ENCODE measurements at regions of chr3 and their contacts with region 1.

Region 1: DNA sequence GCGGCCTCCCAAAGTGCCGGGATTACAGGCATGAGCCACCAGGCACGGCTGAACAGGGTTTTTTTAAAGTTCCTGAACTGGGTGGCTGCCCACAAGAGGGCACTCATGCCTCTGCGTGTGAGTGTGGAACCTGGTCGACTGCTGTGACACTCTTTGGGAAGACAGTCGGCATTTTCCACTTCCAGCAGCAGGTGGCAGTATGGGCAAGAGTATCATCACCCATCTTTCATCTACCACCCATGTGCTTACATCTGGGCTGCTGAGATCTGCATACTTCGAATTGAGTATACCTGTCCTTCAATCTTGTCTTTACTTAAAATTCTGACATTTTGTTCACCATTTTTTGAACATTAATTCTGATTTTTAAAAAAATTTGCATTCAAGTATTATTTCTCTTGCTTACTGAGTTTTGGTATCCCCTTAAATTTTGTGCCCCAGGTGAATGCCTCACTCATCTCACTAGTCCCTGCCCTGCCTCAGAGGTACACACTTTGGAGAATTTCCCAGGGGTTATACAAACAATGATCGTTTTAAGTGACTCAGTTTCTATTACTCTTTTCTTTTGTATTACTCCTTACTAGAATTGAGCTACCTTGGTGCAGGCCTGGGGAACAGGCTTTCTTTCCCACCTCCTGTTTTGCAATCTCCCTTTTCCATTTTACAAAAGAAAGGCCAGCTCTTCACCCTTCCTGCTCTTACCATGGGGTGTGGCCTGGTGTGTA is 11.8 kb downstream of the CLEC3B start:
- DNase-seq: peak; percentile 87 to 95 (median 90)
- ATAC-seq: peak; percentile 88 to 92 (median 90)
- H3K4me3 ChIP-seq: no peak overlapping the region
- H3K27ac ChIP-seq: no peak overlapping the region
- H3K4me1 ChIP-seq: peaks cover 0 to 10% (median 0%) of the 10 kb centered on the region in 3 donors
- H3K27me3 ChIP-seq: no peaks in the 10 kb centered on the region
- CTCF ChIP-seq: peak; percentile 83 to 90 (median 86)

Region 2: DNA sequence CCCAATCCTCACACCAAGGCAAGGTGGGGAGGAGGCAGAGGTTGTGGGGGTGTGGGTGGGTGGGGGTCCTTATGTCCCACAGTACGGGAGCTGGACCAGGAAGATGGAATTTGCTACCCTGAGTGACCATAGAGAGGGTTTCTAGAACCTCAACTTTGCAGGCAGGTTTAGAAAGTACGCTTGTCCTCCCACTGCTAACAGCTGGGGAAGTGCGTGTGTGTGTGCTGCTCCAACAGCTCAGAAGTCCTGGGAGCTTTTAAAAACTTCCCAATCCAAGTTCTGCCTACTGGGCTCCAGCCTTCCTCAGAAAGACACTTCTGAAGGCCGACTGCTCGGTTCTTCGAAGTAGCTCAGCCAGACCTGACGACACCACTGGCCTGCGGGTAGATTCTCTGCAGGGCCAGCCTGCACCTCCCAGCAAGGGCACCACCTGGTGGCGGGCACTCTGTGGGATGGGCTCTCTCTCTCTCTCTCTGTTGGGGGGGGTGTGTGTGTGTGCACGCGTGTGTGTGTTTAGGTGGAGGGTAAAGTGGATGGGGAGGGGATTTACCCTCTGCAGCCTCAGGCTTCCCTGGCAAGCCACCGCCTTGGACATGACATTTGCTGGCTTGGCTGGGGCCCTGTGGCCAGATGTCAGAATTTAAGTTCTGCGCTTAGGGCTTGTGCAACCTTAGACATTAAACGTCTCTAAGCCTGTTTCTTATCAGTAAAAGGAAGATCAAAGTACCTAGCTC is 172.6 kb after region 1 on chr3:
- intact Hi-C with region 1: loop called (anchors 5 to 10 kb)
- DNase-seq: peak; percentile 80 to 94 (median 88)
- ATAC-seq: peak; percentile 99 to 100 (median 100)
- H3K4me3 ChIP-seq: no peak overlapping the region
- H3K27ac ChIP-seq: no peak overlapping the region
- H3K4me1 ChIP-seq: no peaks in the 10 kb centered on the region
- H3K27me3 ChIP-seq: no peaks in the 10 kb centered on the region
- CTCF ChIP-seq: peak; percentile 43 to 70 (median 60)

Region 3: GRCh38 chr3:45218578-45219390 is 180.9 kb after region 1 on chr3:
- intact Hi-C with region 1: loop called in 2 of 3 experiments (anchors 5 kb)
- DNase-seq: no peak
- ATAC-seq: peak in 1 of 4 donors; percentile 36
- H3K4me3 ChIP-seq: no peak overlapping the region
- H3K27ac ChIP-seq: no peak overlapping the region
- H3K4me1 ChIP-seq: no peaks in the 10 kb centered on the region
- H3K27me3 ChIP-seq: no peaks in the 10 kb centered on the region
- CTCF ChIP-seq: no peak

Region 4: DNA sequence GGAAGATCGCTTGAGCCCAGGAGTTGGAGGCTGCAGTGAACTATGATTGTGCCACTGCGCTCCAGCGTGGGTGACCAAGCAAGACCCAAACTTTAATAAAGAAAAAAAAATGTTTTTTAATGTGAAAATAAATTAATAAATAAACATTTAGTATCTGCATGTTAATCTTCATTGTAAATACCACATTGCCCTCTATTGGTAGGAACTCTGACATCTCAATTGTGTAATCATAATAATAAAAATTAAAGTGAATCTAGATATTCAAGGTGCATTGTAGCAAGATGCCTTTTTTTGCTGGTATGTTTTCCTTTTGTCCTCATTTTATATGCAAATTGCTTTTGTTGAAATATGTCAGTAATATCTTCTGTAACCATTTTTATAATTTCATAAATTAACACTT is 461.6 kb after region 1 on chr3:
- intact Hi-C with region 1: loop called in 2 of 3 experiments (anchors 5 to 10 kb)
- DNase-seq: no peak
- ATAC-seq: peak in 3 of 4 donors; percentile 46 to 67 (median 51)
- H3K4me3 ChIP-seq: no peak overlapping the region
- H3K27ac ChIP-seq: no peak overlapping the region
- H3K4me1 ChIP-seq: no peaks in the 10 kb centered on the region
- H3K27me3 ChIP-seq: no peaks in the 10 kb centered on the region
- CTCF ChIP-seq: peak in 2 of 4 donors; percentile 28 to 32

Measured in pancreas (tissue), 10 donors.